Activated naive CD4-positive, alpha-beta T cell treated with anti-CD3 and anti-CD28 coated beads for 36 hours (primary cell): ENCODE measurements at regions of chr11 and their contacts with region 1.

Region 1: GRCh38 chr11:86291466-86292262 is 10.4 kb upstream of the HIKESHI start:
- DNase-seq: peak; percentile 88
- H3K4me3 Mint-ChIP-seq: no peak overlapping the region
- H3K27ac Mint-ChIP-seq: peak overlapping the region; percentile 53
- H3K4me1 Mint-ChIP-seq: peaks cover 58% of the 10 kb centered on the region
- H3K27me3 Mint-ChIP-seq: no peaks in the 10 kb centered on the region

Region 2: DNA sequence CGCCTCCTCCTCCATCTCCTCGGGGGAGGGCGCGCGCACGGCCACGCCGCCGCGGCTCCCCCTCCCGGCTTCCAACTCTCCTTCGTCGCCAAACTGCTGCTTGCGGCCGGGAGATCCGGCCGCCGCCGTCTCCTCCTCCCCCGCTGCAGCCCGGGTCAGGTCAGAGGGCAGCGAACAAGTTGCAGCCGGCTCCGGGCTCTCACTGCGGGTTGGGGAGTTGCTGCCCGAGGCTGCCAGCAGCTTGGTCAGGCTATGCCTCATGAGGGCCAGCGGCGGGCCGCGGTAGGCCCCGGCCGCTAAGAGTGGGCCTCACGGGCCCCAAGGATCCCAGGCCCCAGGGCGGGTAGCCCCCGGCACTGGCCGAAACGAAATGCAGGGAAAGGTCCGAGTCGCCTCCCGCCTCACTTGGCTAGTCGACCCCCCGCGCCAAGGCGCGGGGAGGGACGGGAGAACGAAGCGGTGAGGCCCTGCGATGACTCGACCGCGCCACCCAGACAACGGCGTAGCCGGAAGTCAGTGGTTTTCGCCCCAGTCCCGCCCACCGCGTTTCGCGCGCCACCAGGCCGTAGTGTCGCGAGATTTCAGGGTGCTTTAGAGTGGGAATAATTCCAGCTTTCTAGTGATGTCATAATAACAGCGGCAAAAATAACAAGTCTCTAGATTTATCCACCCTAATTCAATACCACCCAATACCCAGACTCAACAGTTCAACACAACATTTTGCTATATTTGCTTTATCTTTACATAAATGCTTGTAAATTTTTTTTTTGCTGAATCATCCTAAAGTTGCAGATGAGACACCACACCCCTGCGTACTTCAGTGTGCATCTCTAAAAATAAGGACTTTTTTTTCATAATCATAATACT is 626.8 kb before region 1 on chr11 and contains the start of gene CREBZF:
- CTCF ChIA-PET with region 1: no interaction called
- intact Hi-C with region 1: loop called (anchors 2 kb)
- DNase-seq: peak; percentile 98
- H3K4me3 Mint-ChIP-seq: peak within 1 kb of the TSS; percentile 98
- H3K27ac Mint-ChIP-seq: peak within 1 kb of the TSS; percentile 96
- H3K4me1 Mint-ChIP-seq: peaks cover 23% of the 10 kb centered on the region
- H3K27me3 Mint-ChIP-seq: no peaks in the 10 kb centered on the region
- total RNA-seq, gene CREBZF: 53.3 to 53.9 TPM

Region 3: GRCh38 chr11:85854557-85855340 is 436.9 kb before region 1 on chr11:
- CTCF ChIA-PET with region 1: interaction called, 8 read pairs
- intact Hi-C with region 1: loop called (anchors 1 kb)
- DNase-seq: peak; percentile 92
- H3K4me3 Mint-ChIP-seq: peak overlapping the region; percentile 88
- H3K27ac Mint-ChIP-seq: peak overlapping the region; percentile 89
- H3K4me1 Mint-ChIP-seq: peaks cover 7% of the 10 kb centered on the region
- H3K27me3 Mint-ChIP-seq: no peaks in the 10 kb centered on the region

Region 4: DNA sequence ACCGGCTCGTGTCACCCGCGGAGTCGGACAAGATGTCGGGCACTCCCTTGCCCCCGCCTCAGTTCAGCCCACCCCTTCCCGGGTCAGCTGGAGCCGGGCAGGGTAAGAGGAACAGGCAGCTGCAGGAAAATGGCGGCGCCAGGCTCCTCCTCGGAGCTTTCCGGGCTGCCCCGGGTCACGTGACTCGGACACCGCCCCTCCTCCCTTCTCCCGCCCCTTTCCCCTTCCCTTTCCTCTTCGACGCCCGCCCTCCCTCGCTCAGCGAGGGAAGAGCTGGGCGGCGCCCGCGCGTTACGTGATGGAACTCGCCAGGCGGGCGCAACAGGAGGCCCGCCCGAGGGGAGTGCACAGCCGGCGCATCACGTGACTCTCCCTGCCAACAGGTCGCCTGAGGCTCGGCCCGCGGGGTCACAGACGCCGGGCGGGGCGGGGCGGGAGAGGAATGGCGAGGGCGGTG is 222.7 kb before region 1 on chr11 and contains the start of gene PICALM:
- CTCF ChIA-PET with region 1: interaction called, 5 read pairs
- intact Hi-C with region 1: loop called (anchors 1 kb)
- DNase-seq: peak; percentile 99
- H3K4me3 Mint-ChIP-seq: peak within 1 kb of the TSS; percentile 95
- H3K27ac Mint-ChIP-seq: peak within 1 kb of the TSS; percentile 95
- H3K4me1 Mint-ChIP-seq: peaks cover 29% of the 10 kb centered on the region
- H3K27me3 Mint-ChIP-seq: no peaks in the 10 kb centered on the region
- total RNA-seq, gene PICALM: 38.6 to 42.3 TPM

Region 5: GRCh38 chr11:86202013-86202336 is 89.7 kb before region 1 on chr11:
- CTCF ChIA-PET with region 1: interaction called, 3 read pairs
- intact Hi-C with region 1: loop called (anchors 1 kb)
- DNase-seq: peak; percentile 42
- H3K4me3 Mint-ChIP-seq: no peak overlapping the region
- H3K27ac Mint-ChIP-seq: no peak overlapping the region
- H3K4me1 Mint-ChIP-seq: no peaks in the 10 kb centered on the region
- H3K27me3 Mint-ChIP-seq: no peaks in the 10 kb centered on the region

Region 6: DNA sequence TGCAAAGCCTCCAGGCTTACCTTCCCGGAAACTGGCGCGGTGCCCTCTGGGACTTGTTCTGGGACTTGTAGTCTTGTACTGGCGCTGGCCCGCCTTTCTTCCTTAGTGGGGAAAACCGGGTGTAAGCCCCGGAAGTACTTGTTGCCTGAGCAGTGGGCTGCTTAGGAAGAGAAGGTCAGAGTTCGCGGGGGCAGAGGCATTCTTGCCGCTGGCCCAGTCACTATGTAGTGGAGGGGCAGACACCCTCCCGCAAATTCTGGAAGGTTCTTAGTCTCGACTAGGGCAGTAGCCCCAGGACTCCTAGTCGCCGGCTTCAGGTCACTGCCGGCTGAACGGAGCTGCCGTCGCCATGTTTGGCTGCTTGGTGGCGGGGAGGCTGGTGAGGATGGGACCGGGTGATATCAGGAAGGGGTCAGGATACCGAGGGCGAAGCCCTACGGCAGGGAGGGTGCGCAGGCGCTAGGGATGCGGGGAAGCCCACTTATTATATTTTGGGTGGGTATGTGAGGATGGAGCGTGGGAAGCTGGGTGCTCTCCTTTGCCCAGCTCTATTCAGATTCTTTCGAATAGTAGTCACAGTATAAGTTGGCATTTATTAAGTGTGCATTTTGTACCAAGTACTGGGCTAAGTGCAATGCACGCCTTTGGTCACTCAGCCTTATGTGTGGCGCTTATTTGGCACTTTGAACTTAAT is 10.6 kb after region 1 on chr11 and contains the start of gene HIKESHI:
- CTCF ChIA-PET with region 1: interaction called, 5 read pairs
- intact Hi-C with region 1: loop called (anchors 2 kb)
- DNase-seq: peak; percentile 99
- H3K4me3 Mint-ChIP-seq: peak within 1 kb of the TSS; percentile 99
- H3K27ac Mint-ChIP-seq: peak within 1 kb of the TSS; percentile 94
- H3K4me1 Mint-ChIP-seq: peaks cover 26% of the 10 kb centered on the region
- H3K27me3 Mint-ChIP-seq: no peaks in the 10 kb centered on the region
- total RNA-seq, gene HIKESHI: 40.4 to 41.9 TPM